ENCODE measurements at regions of chr17 and their contacts with region 1.

Region 1: GRCh38 chr17:54348234-54348633 is 525.5 kb downstream of the KIF2B start:
- DNase-seq: no peak
- H3K4me3 ChIP-seq: no peak overlapping the region
- H3K27ac ChIP-seq: no peak overlapping the region
- H3K4me1 ChIP-seq: no peaks in the 10 kb centered on the region
- H3K27me3 ChIP-seq: no peaks in the 10 kb centered on the region
- CTCF ChIP-seq: no peak
- POLR2A ChIP-seq: no peak

Region 2: GRCh38 chr17:54324813-54325212 is 23.4 kb before region 1 on chr17:
- intact Hi-C with region 1: loop called (anchors 2 kb)
- DNase-seq: no peak
- H3K4me3 ChIP-seq: no peak overlapping the region
- H3K27ac ChIP-seq: no peak overlapping the region
- H3K4me1 ChIP-seq: no peaks in the 10 kb centered on the region
- H3K27me3 ChIP-seq: no peaks in the 10 kb centered on the region
- CTCF ChIP-seq: no peak
- POLR2A ChIP-seq: no peak

Measured in prostate gland (tissue), 2 donors.